Activated B cell treated with CpG ODN at 0.5 μM for 24 hours (primary cell): ENCODE measurements at regions of chr5 and their contacts with region 1.

Region 1: DNA sequence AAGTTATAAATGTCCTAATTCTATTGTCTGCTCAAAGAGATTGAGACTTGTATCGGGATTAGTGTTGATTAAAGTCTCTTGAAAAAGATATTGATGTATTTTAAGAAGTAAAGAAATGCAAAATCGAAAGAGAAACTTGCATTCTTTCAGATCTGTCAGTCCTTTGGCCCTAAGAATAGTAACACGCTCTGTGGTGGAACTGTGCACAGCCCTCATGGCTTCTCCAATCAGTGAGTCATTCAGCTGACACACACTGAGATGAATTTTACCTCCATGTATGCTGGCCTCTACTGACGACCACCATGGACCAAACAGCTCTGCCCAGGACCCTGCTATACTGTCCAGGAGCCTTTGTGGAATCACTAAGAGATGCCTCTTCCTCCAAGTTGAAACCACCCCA is 232.4 kb downstream of the ESM1 start:
- DNase-seq: no peak
- ATAC-seq: peak; percentile 90
- H3K4me3 Mint-ChIP-seq: peak overlapping the region; percentile 72
- H3K27ac Mint-ChIP-seq: peak overlapping the region; percentile 81
- H3K4me1 Mint-ChIP-seq: peaks cover 60% of the 10 kb centered on the region
- H3K27me3 Mint-ChIP-seq: no peaks in the 10 kb centered on the region
- CTCF ChIP-seq: no peak

Region 2: GRCh38 chr5:54610197-54610944 is 142.7 kb before region 1 on chr5:
- CTCF ChIA-PET with region 1: no interaction called
- POLR2A ChIA-PET with region 1: interaction called, 4 read pairs
- intact Hi-C with region 1: loop called (anchors 1 kb)
- DNase-seq: no peak
- ATAC-seq: peak; percentile 94
- H3K4me3 Mint-ChIP-seq: peak overlapping the region; percentile 55
- H3K27ac Mint-ChIP-seq: peak overlapping the region; percentile 71
- H3K4me1 Mint-ChIP-seq: peaks cover 50% of the 10 kb centered on the region
- H3K27me3 Mint-ChIP-seq: no peaks in the 10 kb centered on the region
- CTCF ChIP-seq: no peak

Region 3: GRCh38 chr5:54673523-54674225 is 79.4 kb before region 1 on chr5:
- CTCF ChIA-PET with region 1: no interaction called
- POLR2A ChIA-PET with region 1: interaction called, 4 read pairs
- intact Hi-C with region 1: loop called (anchors 5 kb)
- DNase-seq: peak; percentile 29
- ATAC-seq: peak; percentile 90
- H3K4me3 Mint-ChIP-seq: no peak overlapping the region
- H3K27ac Mint-ChIP-seq: peak overlapping the region; percentile 16
- H3K4me1 Mint-ChIP-seq: peaks cover 80% of the 10 kb centered on the region
- H3K27me3 Mint-ChIP-seq: no peaks in the 10 kb centered on the region
- CTCF ChIP-seq: no peak

Region 4: GRCh38 chr5:54785729-54786591 is 32.9 kb after region 1 on chr5:
- CTCF ChIA-PET with region 1: no interaction called
- POLR2A ChIA-PET with region 1: interaction called, 6 read pairs
- intact Hi-C with region 1: loop called (anchors 1 kb)
- DNase-seq: peak; percentile 47
- ATAC-seq: peak; percentile 90
- H3K4me3 Mint-ChIP-seq: no peak overlapping the region
- H3K27ac Mint-ChIP-seq: peak overlapping the region; percentile 88
- H3K4me1 Mint-ChIP-seq: peaks cover 32% of the 10 kb centered on the region
- H3K27me3 Mint-ChIP-seq: no peaks in the 10 kb centered on the region
- CTCF ChIP-seq: no peak